ENCODE measurements at regions of chr20 and their contacts with region 1.

Region 1: GRCh38 chr20:15986690-15987089 is 586.6 kb downstream of the KIF16B start:
- DNase-seq: no peak
- ATAC-seq: peak; percentile 81
- H3K4me3 Mint-ChIP-seq: peak overlapping the region; percentile 86
- H3K27ac Mint-ChIP-seq: peak overlapping the region; percentile 97
- H3K4me1 Mint-ChIP-seq: peaks cover 64% of the 10 kb centered on the region
- H3K27me3 Mint-ChIP-seq: no peaks in the 10 kb centered on the region
- CTCF ChIP-seq: no peak

Region 2: GRCh38 chr20:15317546-15318232 is 669.0 kb before region 1 on chr20:
- CTCF ChIA-PET with region 1: no interaction called
- POLR2A ChIA-PET with region 1: interaction called, 3 read pairs
- intact Hi-C with region 1: loop called (anchors 2 kb)
- DNase-seq: no peak
- ATAC-seq: peak; percentile 91
- H3K4me3 Mint-ChIP-seq: peak overlapping the region; percentile 69
- H3K27ac Mint-ChIP-seq: peak overlapping the region; percentile 88
- H3K4me1 Mint-ChIP-seq: peaks cover 64% of the 10 kb centered on the region
- H3K27me3 Mint-ChIP-seq: no peaks in the 10 kb centered on the region
- CTCF ChIP-seq: no peak

Region 3: GRCh38 chr20:15776770-15777466 is 209.8 kb before region 1 on chr20:
- CTCF ChIA-PET with region 1: no interaction called
- POLR2A ChIA-PET with region 1: no interaction called
- intact Hi-C with region 1: no loop called
- DNase-seq: no peak
- ATAC-seq: no peak
- H3K4me3 Mint-ChIP-seq: no peak overlapping the region
- H3K27ac Mint-ChIP-seq: no peak overlapping the region
- H3K4me1 Mint-ChIP-seq: peaks cover 11% of the 10 kb centered on the region
- H3K27me3 Mint-ChIP-seq: no peaks in the 10 kb centered on the region
- CTCF ChIP-seq: no peak

Region 4: DNA sequence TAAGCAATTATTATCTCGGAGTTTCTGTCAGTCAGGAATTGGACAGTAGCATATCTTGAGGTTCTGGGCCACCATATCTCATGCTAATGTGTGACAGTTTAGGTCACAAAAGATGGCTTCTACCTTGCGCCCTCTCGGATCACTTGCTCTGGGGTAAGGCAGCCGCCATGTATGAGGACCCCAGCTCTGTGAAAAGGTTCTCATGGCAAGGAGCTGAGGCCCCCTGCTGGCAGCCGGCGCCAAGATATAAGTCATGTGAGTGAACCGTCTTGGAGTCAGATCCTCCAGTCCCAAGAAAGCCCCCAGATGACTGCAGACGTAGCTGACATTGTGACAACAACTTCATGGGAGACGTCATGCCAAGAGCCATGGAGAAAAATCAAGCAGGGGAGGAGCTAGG is 84.2 kb before region 1 on chr20:
- CTCF ChIA-PET with region 1: no interaction called
- POLR2A ChIA-PET with region 1: no interaction called
- intact Hi-C with region 1: no loop called
- DNase-seq: no peak
- ATAC-seq: no peak
- H3K4me3 Mint-ChIP-seq: no peak overlapping the region
- H3K27ac Mint-ChIP-seq: no peak overlapping the region
- H3K4me1 Mint-ChIP-seq: no peaks in the 10 kb centered on the region
- H3K27me3 Mint-ChIP-seq: no peaks in the 10 kb centered on the region
- CTCF ChIP-seq: no peak

Region 5: GRCh38 chr20:15923030-15923776 is 63.5 kb before region 1 on chr20:
- CTCF ChIA-PET with region 1: no interaction called
- POLR2A ChIA-PET with region 1: interaction called, 12 read pairs
- intact Hi-C with region 1: loop called (anchors 1 kb)
- DNase-seq: peak; percentile 24
- ATAC-seq: peak; percentile 74
- H3K4me3 Mint-ChIP-seq: peak overlapping the region; percentile 78
- H3K27ac Mint-ChIP-seq: peak overlapping the region; percentile 96
- H3K4me1 Mint-ChIP-seq: peaks cover 74% of the 10 kb centered on the region
- H3K27me3 Mint-ChIP-seq: no peaks in the 10 kb centered on the region
- CTCF ChIP-seq: no peak

Region 6: DNA sequence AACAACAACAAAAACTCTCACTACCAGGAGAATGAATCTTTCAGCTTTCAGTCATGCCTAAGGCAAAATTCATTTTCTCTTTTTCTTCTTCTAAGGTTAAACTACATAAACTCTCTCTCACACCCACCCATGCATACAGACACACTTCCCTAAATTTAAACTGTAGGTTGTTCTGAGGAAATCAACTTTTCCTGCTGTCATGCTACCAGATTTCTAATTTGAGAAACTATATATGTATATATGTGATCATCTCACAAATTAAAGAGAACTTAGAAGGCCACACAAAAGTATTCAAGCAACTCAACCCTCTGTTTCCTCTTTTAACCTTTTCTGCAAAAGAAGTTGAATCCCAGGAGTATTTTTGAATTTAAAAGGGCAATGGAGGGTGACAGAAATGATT is 54.1 kb after region 1 on chr20:
- CTCF ChIA-PET with region 1: no interaction called
- POLR2A ChIA-PET with region 1: interaction called, 3 read pairs
- intact Hi-C with region 1: loop called (anchors 1 kb)
- DNase-seq: no peak
- ATAC-seq: peak; percentile 80
- H3K4me3 Mint-ChIP-seq: peak overlapping the region; percentile 60
- H3K27ac Mint-ChIP-seq: peak overlapping the region; percentile 79
- H3K4me1 Mint-ChIP-seq: peaks cover 81% of the 10 kb centered on the region
- H3K27me3 Mint-ChIP-seq: no peaks in the 10 kb centered on the region
- CTCF ChIP-seq: no peak

Region 7: DNA sequence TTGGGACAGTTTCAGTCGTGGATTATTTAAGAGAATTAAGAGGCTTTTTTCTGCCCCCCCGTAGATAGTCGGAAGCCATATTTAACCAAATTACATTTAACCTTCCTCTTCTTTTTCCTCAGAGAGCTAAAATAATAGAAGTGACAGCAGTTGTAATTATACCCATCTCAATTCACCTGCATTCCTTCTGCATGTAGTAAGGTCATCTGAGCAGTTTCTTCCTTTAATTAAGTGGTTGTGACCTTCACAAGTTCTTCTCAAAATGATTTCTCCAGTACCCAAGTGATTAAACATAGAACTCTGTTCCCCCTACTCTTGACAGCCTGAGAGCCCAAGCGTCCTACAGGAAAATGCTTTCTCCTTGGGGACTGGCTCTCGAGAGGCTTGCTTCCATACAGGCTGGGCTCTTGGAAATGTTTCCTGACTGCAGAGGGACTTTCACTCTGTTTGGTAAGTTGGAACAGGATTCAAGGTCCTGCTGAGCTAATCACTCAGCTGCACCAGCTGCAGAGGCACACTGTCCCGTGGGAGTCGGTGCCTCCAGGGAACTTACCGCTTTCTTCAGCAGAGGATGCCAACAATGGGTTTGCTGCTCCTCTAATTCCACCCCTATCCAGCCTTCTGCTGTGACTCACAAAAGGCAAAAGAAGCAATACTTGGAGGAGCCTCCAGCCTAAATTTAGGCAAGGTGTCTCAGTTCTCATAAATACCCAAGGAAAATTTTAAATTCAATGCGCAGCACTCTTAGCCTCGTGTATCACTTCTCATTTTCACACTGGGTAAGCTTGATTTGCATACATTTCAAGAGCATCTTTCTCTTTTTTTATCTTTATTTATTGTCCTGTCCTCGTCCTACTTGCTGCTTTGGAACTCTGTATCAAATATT is 171.6 kb after region 1 on chr20:
- CTCF ChIA-PET with region 1: no interaction called
- POLR2A ChIA-PET with region 1: interaction called, 7 read pairs
- intact Hi-C with region 1: loop called (anchors 1 kb)
- DNase-seq: peak; percentile 48
- ATAC-seq: peak; percentile 85
- H3K4me3 Mint-ChIP-seq: peak overlapping the region; percentile 81
- H3K27ac Mint-ChIP-seq: peak overlapping the region; percentile 96
- H3K4me1 Mint-ChIP-seq: peaks cover 66% of the 10 kb centered on the region
- H3K27me3 Mint-ChIP-seq: no peaks in the 10 kb centered on the region
- CTCF ChIP-seq: no peak

Region 8: GRCh38 chr20:16392346-16392745 is 405.7 kb after region 1 on chr20:
- CTCF ChIA-PET with region 1: no interaction called
- POLR2A ChIA-PET with region 1: no interaction called
- intact Hi-C with region 1: loop called (anchors 5 kb)
- DNase-seq: peak; percentile 26
- ATAC-seq: peak; percentile 85
- H3K4me3 Mint-ChIP-seq: peak overlapping the region; percentile 72
- H3K27ac Mint-ChIP-seq: peak overlapping the region; percentile 46
- H3K4me1 Mint-ChIP-seq: peaks cover 40% of the 10 kb centered on the region
- H3K27me3 Mint-ChIP-seq: no peaks in the 10 kb centered on the region
- CTCF ChIP-seq: no peak

Region 9: GRCh38 chr20:16573001-16573965 is 586.6 kb after region 1 on chr20 and contains the start of gene KIF16B:
- CTCF ChIA-PET with region 1: no interaction called
- POLR2A ChIA-PET with region 1: no interaction called
- intact Hi-C with region 1: loop called (anchors 10 kb)
- DNase-seq: peak; percentile 93
- ATAC-seq: peak; percentile 90
- H3K4me3 Mint-ChIP-seq: peak within 1 kb of the TSS; percentile 94
- H3K27ac Mint-ChIP-seq: peak within 1 kb of the TSS; percentile 69
- H3K4me1 Mint-ChIP-seq: peaks cover 42% of the 10 kb centered on the region
- H3K27me3 Mint-ChIP-seq: no peaks in the 10 kb centered on the region
- CTCF ChIP-seq: no peak
- total RNA-seq, gene KIF16B: 7.2 and 9.1 TPM in 2 replicates

Measured in activated B cell treated with CpG ODN at 0.5 μM for 24 hours (primary cell).